PC-3 (cell line): ENCODE measurements at regions of chr1 and their contacts with region 1.

Region 1: DNA sequence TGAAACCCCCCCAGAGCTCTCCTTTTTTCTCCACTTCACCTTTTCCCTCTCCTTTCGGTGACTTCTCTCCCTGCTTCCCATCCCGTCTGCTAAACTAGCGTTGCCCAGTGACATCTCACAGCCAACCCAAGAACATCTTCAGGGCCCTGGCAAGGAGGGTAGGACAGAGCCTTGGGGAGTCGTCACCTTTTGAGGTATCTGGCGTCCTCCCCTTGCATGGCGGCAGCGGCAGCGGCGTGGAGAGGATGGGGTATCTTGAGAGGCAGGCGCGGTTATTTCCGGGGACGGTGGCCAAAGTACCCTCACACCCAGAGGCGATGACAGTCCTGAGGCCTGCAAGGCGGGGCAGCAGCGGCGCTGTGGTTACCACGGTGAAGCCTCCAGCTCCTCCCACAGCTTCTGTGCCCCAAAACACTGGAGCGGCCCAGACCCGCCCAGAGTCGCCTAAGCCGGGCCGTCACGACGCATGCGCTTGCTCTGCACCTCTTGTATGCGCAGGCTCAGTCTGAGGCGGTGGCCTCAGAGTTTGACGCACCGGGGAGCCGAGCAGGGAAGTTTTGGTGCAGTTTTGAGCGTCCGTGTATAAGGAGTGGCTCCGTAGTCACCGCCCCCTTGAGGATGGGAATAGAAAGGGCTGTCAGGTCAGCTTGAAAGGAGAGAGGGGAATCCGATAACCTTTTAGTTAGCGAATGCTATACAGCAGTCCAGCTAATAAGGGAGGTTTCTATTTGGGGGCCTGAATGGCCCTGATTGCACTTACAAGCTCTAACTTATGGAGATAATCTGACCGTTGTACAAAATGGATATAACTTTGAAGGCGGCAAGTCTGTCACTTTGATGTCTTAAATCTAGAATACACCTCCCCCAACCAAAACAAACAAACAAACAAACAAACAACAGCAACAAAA is at the start of gene KIFAP3:
- DNase-seq: peak; percentile 95
- ATAC-seq: peak; percentile 95
- H3K4me3 ChIP-seq: peak within 1 kb of the TSS; percentile 74
- H3K27ac ChIP-seq: 0 out of 2 replicates have a peak within 1 kb of the TSS, but pooled peaks have one; percentile 19
- H3K4me1 ChIP-seq: peaks cover 10% of the 10 kb centered on the region; the same call in 1 of the 2 replicates
- H3K27me3 ChIP-seq: no peaks in the 10 kb centered on the region
- CTCF ChIP-seq: peak; percentile 55
- total RNA-seq, gene KIFAP3: 5.1 and 6.9 TPM in 2 replicates

Region 2: DNA sequence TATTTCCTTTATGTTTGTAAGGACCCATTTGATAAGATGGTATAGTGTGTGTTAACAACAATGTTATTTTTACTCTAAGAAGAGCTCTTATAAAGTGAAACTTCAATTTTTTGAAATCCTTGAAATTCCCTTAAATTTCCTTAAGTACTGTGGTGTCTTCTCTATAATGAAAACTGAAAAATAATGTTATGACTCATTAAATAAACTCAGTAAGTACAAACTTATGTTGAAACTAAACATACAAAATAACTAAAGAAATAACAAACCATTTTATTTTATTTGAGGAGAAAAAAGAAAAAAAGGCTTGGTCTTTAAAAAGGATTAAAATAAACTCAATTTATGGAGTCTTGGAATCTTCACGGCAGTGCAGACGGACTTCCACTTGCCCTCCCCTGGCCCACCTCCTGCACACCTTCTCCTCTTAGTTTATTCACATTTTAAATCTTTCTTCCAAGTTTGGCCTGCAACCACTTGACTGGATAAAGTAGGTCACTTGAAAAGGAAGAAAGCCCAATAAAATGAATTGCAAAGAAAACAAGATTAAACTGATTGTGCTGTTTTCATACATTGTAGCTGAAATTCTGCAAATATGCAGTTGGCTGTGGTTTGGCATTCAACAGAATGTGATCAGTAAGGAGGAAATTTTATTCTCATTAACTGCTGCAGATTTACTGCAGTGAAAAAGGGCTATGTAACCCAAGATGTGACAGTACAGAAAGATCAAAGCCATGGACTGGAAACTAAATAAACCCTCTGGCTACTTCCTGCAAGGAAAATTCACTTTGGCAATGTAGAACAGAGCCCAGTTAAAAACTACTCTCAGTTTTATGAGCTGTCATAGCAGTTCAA is 132.3 kb before region 1 on chr1:
- CTCF ChIA-PET with region 1: no interaction called
- POLR2A ChIA-PET with region 1: no interaction called
- intact Hi-C with region 1: loop called (anchors 5 kb)
- DNase-seq: peak; percentile 60
- ATAC-seq: peak; percentile 93
- H3K4me3 ChIP-seq: no peak overlapping the region
- H3K27ac ChIP-seq: peak overlapping the region; percentile 36
- H3K4me1 ChIP-seq: peaks cover 12% of the 10 kb centered on the region
- H3K27me3 ChIP-seq: no peaks in the 10 kb centered on the region
- CTCF ChIP-seq: no peak

Region 3: GRCh38 chr1:169989246-169989645 is 85.3 kb before region 1 on chr1:
- CTCF ChIA-PET with region 1: no interaction called
- POLR2A ChIA-PET with region 1: no interaction called
- intact Hi-C with region 1: no loop called
- DNase-seq: no peak
- ATAC-seq: no peak
- H3K4me3 ChIP-seq: no peak overlapping the region
- H3K27ac ChIP-seq: no peak overlapping the region
- H3K4me1 ChIP-seq: no peaks in the 10 kb centered on the region
- H3K27me3 ChIP-seq: no peaks in the 10 kb centered on the region
- CTCF ChIP-seq: no peak

Region 4: DNA sequence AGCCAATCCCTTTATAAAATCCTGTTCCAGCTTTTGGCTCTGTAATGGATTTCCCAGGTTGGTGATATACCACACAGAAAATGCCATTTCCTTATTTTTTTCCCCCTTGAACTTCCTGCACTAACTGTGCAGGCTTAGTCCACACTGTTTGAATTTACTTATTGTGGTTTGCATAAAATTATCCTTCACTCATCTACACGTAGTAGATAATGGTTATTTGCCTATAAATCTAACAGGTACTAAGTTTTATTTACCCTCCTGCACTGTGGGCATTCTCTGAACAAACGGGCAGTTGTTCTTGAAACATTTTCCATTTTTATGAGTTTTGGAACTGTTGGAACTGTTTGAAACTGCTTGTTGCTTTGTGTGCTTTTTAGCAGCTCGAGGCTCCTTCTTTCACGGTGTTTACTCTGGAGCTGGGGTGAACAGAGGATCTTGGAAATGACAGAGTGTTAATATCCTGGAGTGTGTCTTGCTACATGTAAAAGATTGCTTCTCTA is 23.0 kb after region 1 on chr1:
- CTCF ChIA-PET with region 1: no interaction called
- POLR2A ChIA-PET with region 1: no interaction called
- intact Hi-C with region 1: loop called (anchors 2 kb)
- DNase-seq: peak; percentile 24
- ATAC-seq: peak; percentile 90
- H3K4me3 ChIP-seq: no peak overlapping the region
- H3K27ac ChIP-seq: no peak overlapping the region
- H3K4me1 ChIP-seq: 0 out of 2 replicates have a peak, but pooled peaks cover 5% of the 10 kb centered on the region
- H3K27me3 ChIP-seq: no peaks in the 10 kb centered on the region
- CTCF ChIP-seq: no peak